ENCODE measurements at regions of chr11 and their contacts with region 1.

Region 1: DNA sequence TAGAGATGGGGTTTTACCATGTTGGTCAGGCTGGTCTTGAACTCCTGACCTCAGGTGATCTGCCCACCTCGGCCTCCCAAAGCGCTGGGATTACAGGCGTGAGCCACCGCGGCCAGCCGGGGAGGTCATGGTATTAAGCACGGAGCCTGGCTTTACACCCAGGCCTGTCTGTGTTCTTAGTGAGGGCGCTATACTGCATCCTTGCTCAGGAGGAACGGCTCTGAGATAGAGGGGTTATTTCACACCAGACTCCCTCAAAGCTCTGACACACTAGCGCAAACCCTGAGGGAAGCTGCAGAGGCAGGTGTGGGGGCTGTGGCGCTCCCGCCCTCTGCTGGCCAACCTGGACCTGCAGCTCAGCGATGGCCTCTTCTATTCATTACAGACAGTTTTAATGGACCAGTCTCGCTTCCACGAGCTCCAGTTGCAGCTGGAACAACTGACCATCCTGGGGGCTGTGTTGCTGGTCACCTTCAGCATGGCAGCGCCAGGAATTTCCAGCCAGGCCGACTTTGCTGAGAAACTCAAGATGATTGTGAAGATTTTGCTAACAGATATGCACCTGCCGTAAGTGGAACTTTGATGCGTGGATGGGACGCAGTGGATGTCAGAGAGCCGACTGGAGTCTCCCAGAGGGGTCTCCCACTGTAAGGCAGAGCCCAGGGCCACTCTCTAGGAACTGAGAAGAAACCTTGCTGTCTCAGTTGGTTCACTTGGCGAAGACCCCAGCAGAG is 26.2 kb downstream of the TCP11L1 start:
- DNase-seq: peak in 1 of 2 donors; percentile 55
- H3K4me3 ChIP-seq: no peak overlapping the region
- H3K27ac ChIP-seq: no peak overlapping the region
- H3K4me1 ChIP-seq: no peaks in the 10 kb centered on the region
- H3K27me3 ChIP-seq: no peaks in the 10 kb centered on the region
- CTCF ChIP-seq: peak; percentile 68 to 72

Region 2: GRCh38 chr11:32960553-32961164 is 105.0 kb before region 1 on chr11:
- intact Hi-C with region 1: loop called (anchors 5 kb)
- DNase-seq: no peak
- H3K4me3 ChIP-seq: no peak overlapping the region
- H3K27ac ChIP-seq: no peak overlapping the region
- H3K4me1 ChIP-seq: no peaks in the 10 kb centered on the region
- H3K27me3 ChIP-seq: no peaks in the 10 kb centered on the region
- CTCF ChIP-seq: peak; percentile 53 to 63

Region 3: GRCh38 chr11:33027846-33028536 is 37.6 kb before region 1 on chr11:
- intact Hi-C with region 1: no loop called
- DNase-seq: no peak
- H3K4me3 ChIP-seq: no peak overlapping the region
- H3K27ac ChIP-seq: no peak overlapping the region
- H3K4me1 ChIP-seq: no peaks in the 10 kb centered on the region
- H3K27me3 ChIP-seq: no peaks in the 10 kb centered on the region
- CTCF ChIP-seq: no peak